ENCODE measurements at regions of chr1 and their contacts with region 1.

Region 1: GRCh38 chr1:92291372-92291999 is 7.3 kb downstream of the GLMN start:
- DNase-seq: no peak
- H3K4me3 Mint-ChIP-seq: no peak overlapping the region
- H3K27ac Mint-ChIP-seq: no peak overlapping the region
- H3K4me1 Mint-ChIP-seq: peaks cover 17% of the 10 kb centered on the region
- H3K27me3 Mint-ChIP-seq: no peaks in the 10 kb centered on the region

Region 2: DNA sequence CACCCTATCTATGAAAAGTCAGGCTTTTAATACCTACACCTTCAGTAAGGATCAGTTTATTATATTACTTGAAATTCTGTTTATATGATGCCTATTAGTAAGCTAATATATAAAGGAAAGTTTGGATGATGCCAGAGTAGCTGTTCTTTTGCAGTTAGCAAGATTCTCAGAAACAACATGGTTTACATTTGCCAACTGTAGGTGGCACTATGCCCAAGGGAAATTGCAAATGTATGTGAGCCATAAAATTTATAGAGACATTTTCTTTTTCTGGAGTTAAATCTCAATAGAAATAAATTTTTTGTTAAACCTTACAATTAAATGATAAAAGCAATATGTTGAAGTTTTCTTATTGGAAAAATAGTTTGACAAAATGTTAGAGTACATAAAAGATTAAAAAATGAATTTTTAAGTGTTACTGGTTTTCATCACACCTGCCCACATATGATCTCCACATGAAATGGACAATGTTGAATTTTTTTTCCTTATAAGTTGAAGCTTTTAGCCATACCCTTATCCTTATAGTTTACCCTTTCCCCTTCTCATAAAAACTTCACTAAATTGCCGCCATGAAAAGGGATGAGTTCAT is 293.8 kb before region 1 on chr1:
- CTCF ChIA-PET with region 1: interaction called, 10 read pairs
- POLR2A ChIA-PET with region 1: no interaction called
- DNase-seq: peak; percentile 47
- H3K4me3 Mint-ChIP-seq: no peak overlapping the region
- H3K27ac Mint-ChIP-seq: no peak overlapping the region
- H3K4me1 Mint-ChIP-seq: no peaks in the 10 kb centered on the region
- H3K27me3 Mint-ChIP-seq: peaks cover 5% of the 10 kb centered on the region

Region 3: GRCh38 chr1:92259350-92259749 is 32.1 kb before region 1 on chr1:
- CTCF ChIA-PET with region 1: no interaction called
- POLR2A ChIA-PET with region 1: no interaction called
- DNase-seq: no peak
- H3K4me3 Mint-ChIP-seq: no peak overlapping the region
- H3K27ac Mint-ChIP-seq: no peak overlapping the region
- H3K4me1 Mint-ChIP-seq: no peaks in the 10 kb centered on the region
- H3K27me3 Mint-ChIP-seq: no peaks in the 10 kb centered on the region

Measured in activated CD4-positive, alpha-beta memory T cell treated with anti-CD3 and anti-CD28 coated beads, Interleukin-2, amount 10 ng/mL, durations not matched to agents 7 days and 5 days (primary cell).